Common myeloid progenitor, CD34-positive (primary cell): ENCODE measurements at regions of chr6 and their contacts with region 1.

Region 1: DNA sequence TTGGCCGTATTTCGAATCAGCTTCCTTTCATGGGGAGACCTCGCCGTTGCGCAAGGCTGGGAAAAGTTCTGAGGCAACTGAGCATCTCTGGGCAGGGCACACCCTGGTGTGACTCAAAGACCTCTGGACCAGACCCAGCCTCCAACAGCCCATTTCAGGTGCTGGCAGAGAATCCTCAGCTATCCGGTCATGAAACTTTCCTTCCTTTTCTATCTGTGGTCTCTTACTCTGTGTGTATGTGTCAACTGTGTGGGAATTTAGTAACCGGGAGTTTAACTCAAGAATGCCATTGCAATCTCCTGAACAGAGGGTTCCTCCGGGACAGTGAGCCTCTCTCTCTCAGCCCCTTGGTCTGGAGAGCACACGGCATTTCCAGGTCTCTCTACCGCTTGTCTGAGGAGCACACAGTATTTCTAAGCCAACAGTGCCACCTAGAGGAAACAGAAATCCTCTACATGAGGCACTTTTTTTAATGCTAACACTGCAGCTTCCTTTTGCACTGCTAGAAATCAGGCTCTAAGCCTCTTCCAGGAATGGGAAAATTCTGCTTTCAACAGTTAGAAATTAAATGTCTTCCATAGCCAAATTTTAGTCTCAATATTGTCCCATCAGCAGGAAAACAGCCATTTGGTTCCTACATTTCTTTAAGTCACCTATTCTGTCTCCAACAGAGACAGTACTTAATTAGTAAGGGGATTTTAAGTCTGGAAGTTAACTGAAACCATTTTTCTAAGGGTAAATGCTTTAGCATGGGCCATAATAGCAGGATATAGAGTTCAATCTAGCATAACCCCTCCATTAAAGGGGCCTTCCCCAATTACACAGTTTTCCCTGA is 32.7 kb downstream of the PLN start:
- DNase-seq: peak; percentile 64 to 84 (median 78)
- H3K4me3 ChIP-seq: no peak overlapping the region
- H3K27ac ChIP-seq: no peak overlapping the region
- H3K4me1 ChIP-seq: peaks cover 0 to 2% (median 0%) of the 10 kb centered on the region in 4 experiments
- H3K27me3 ChIP-seq: no peaks in the 10 kb centered on the region

Region 2: DNA sequence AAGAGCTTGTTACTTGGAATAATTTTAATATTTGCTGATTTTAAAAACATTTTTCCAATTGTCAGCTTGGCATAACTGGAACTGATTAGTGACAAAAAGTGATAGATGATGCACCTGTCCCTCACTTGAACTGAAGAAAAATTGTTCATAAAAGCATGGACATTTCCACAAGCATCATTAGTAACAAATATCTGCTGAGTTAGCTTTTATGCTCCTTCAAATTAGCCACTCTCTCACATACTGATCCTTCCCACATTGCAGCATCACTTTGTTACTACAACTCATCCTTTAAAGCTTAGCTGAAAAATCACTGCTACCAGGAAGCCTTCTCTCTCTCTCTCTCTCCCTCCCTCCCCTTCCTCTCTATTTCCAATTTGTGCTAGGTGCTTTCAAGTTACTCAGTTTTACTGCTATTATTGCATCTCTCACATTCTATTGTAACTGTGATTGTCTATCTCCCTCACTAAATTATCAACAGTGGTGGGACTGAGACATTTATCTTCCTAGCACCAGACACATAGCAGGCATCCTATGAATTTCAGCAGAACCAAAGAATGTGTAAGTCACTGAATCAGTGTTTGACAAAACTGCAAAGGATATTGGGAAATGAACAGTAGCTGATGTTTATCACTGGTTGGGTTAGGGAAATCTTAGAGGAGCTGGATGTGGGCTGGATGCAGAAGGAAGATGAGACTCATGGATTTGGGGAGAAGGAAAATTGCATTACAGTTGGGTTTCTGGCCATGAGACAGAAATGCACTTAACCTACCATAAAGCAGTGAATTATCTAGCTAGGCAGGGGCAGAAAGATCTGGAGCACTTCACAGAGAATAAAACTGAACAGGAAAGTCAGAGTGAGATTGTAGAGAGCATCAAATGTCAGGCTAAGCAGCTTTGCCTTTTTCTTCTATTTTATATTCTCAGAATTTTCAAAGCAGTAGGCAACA is 161.1 kb before region 1 on chr6:
- CTCF ChIA-PET with region 1: no interaction called
- POLR2A ChIA-PET with region 1: no interaction called
- DNase-seq: no peak
- H3K4me3 ChIP-seq: no peak overlapping the region
- H3K27ac ChIP-seq: no peak overlapping the region
- H3K4me1 ChIP-seq: no peaks in the 10 kb centered on the region
- H3K27me3 ChIP-seq: no peaks in the 10 kb centered on the region

Region 3: DNA sequence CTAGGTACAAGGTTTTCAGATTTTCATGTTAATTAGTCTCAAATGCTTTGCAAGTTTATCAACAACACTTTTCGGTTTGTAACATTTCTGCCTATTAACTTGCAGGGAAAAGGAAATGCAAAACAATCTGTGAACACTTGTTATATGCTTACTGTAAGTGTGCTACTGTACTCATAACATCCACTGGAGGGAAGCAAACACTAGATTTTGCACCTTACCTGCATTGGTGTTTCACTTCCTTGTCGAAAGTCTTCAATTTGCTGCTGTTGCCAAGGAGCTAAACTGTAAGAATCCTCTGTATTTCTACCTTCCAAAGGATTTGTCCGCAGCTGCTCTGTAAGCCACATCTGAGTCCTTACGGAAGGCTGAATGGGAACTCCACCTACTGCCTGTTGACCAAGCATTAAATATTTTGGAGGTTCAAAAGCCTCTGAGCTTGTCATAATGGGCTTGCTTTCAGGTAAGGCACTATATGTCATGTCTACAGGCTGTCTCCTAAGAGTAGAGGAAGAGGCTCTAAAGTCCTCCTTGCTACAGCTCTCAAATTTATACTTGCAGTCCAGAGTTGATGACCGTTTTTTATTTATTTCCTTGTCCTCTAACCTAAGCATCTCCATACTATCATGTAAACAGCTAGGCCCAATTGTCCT is 15.4 kb before region 1 on chr6:
- CTCF ChIA-PET with region 1: interaction called, 10 read pairs
- POLR2A ChIA-PET with region 1: no interaction called
- DNase-seq: peak; percentile 48 to 73 (median 70)
- H3K4me3 ChIP-seq: no peak overlapping the region
- H3K27ac ChIP-seq: no peak overlapping the region
- H3K4me1 ChIP-seq: no peaks in the 10 kb centered on the region
- H3K27me3 ChIP-seq: no peaks in the 10 kb centered on the region